ENCODE measurements at regions of chr17 and their contacts with region 1.

Region 1: DNA sequence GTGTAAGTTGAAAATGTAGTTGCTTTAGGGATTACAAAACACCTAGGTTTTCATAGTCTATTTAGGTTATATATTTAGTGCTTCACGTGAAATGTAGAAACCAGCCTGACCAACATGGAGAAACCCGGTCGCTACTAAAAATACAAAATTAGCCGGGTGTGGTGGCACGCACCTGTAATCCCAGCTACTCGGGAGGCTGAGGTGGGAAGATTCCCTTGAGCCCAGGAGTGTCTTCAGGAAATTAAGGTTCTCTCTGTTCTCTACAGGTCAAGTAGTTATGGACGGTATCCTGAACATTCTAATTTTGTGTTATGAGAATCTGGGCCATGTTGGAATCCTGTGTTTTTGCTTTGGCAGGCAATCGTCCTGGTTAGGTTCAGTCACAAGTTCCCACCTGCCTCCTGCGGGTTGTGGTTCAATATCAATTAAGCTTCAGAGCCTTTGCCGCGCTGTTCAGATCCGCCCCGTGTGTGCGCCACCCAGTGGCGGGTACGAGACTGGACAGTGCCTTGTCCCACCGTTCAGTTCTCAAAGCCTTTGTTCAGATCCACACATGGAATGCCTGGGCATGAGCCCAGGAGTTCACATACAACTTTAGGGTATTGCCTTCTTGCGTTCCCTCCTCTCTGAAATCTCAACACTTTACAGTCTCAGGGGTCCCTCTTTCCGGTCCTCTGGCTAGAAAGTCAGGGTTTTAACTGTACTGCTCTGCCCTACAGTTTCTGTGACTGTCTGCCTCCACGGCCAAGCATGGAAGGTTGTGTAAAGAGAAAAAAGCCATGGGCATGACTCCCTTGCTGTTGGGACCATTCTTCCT is 41.7 kb downstream of the HEATR6 start:
- DNase-seq: peak; percentile 20 to 86 (median 66)

Region 2: GRCh38 chr17:59914274-59914854 is 122.6 kb before region 1 on chr17:
- intact Hi-C with region 1: loop called (anchors 10 kb)
- DNase-seq: peak in 4 of 42 donors; percentile 17 to 50 (median 44)